ENCODE measurements at regions of chr10 and their contacts with region 1.

Region 1: GRCh38 chr10:71812016-71812912 is 38.8 kb downstream of the PSAP start:
- DNase-seq: peak; percentile 83
- H3K4me3 Mint-ChIP-seq: no peak overlapping the region
- H3K27ac Mint-ChIP-seq: no peak overlapping the region
- H3K4me1 Mint-ChIP-seq: no peaks in the 10 kb centered on the region
- H3K27me3 Mint-ChIP-seq: no peaks in the 10 kb centered on the region

Region 2: GRCh38 chr10:71486484-71487114 is 325.7 kb before region 1 on chr10:
- CTCF ChIA-PET with region 1: interaction called, 5 read pairs
- POLR2A ChIA-PET with region 1: no interaction called
- intact Hi-C with region 1: loop called (anchors 10 kb)
- DNase-seq: peak; percentile 70
- H3K4me3 Mint-ChIP-seq: no peak overlapping the region
- H3K27ac Mint-ChIP-seq: no peak overlapping the region
- H3K4me1 Mint-ChIP-seq: no peaks in the 10 kb centered on the region
- H3K27me3 Mint-ChIP-seq: peaks cover 2% of the 10 kb centered on the region

Region 3: DNA sequence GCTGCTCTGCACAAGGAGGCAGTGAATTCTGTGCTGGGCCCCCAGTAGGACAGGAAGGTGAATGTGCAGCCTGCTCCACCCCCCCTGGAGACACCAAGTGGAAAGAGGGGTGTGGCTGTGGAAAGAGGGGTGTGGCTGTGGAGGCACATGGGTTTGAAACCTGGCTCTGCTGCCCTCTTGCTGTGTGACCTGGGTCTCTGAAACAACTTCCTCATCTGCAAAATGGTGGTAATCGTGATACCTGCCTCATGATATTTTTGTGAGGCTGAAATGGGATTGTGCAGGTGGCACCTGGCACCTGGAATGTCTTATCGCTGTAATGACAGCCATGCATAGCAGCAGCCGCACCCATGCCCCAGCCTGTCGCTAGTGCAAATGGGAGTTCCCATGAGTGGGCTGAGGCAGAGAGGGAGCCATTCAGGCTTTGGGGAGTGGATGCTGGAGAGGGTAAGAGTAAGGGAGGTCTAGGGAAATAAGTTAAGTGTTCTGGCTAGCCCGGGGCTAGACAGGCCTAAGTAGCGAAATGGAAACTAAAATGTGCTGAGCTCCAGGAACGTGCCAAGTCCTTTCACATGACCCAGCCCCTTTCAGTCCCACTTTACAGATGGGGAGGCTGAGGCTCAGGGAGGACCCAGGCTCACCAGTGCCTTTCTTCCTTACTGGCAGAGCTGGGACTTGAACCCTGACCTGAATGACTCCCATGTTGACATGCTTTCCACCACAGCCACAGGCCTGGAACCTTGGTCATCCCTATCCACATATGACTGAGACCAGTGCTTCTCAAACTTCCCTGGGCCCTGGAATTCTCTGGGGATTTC is 127.7 kb before region 1 on chr10:
- CTCF ChIA-PET with region 1: no interaction called
- POLR2A ChIA-PET with region 1: no interaction called
- intact Hi-C with region 1: no loop called
- DNase-seq: peak; percentile 42
- H3K4me3 Mint-ChIP-seq: no peak overlapping the region
- H3K27ac Mint-ChIP-seq: no peak overlapping the region
- H3K4me1 Mint-ChIP-seq: no peaks in the 10 kb centered on the region
- H3K27me3 Mint-ChIP-seq: no peaks in the 10 kb centered on the region

Measured in activated CD4-positive, alpha-beta memory T cell treated with anti-CD3 and anti-CD28 coated beads for 36 hours (primary cell).